Posterior vena cava (tissue), 2 donors: ENCODE measurements at regions of chr6 and their contacts with region 1.

Region 1: DNA sequence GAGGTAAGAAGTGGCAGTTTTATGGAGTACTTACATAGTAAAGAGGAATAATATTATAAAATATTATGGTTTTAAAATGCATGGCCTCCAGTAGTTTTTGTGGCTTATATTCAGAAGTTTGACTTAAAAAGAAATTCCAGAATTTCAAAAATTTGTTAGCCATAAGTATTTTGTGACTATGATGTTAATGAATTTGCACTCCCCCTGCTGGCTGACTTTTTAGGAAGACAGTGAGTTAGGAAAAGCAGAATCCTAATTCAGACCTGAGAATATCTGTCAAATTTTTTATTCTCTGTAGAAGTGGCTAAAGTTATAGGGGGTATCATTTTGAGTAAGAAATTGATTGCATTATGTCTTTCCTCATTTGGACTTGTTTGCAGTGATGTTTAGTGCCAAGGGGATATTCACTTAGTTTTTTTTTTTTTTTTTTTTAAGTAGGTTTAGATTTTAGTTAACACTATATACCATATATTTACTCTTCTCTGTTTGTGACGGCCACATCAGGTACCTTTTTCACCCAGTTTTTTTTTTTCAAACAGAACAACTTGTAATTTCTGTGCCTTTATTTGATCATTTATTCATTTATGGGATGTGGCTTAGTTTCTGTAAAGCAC is 40.8 kb downstream of the ZFAND3 start:
- DNase-seq: no peak

Region 2: GRCh38 chr6:37713529-37714119 is 146.7 kb before region 1 on chr6:
- intact Hi-C with region 1: loop called in 1 of 2 experiments (anchors 10 kb)
- DNase-seq: no peak